B cell (primary cell): ENCODE measurements at regions of chr1 and their contacts with region 1.

Region 1: GRCh38 chr1:224113918-224114786 is at the start of gene FBXO28:
- DNase-seq: peak; percentile 93
- ATAC-seq: peak; percentile 92
- H3K4me3 ChIP-seq: peak within 1 kb of the TSS; percentile 78 to 92 (median 86)
- H3K4me3 Mint-ChIP-seq: peak within 1 kb of the TSS; percentile 92
- H3K27ac ChIP-seq: peak within 1 kb of the TSS; percentile 96
- H3K27ac Mint-ChIP-seq: peak within 1 kb of the TSS; percentile 95
- H3K4me1 ChIP-seq: peaks cover 20 to 27% of the 10 kb centered on the region in 2 donors
- H3K4me1 Mint-ChIP-seq: peaks cover 30% of the 10 kb centered on the region
- H3K27me3 ChIP-seq: peaks cover 0 to 5% (median 0%) of the 10 kb centered on the region in 4 experiments
- H3K27me3 Mint-ChIP-seq: peaks cover under 1% of the 10 kb centered on the region
- CTCF ChIP-seq: peak; percentile 17
- total RNA-seq, gene FBXO28: 37.0 and 39.7 TPM in 2 replicates

Region 2: GRCh38 chr1:223700942-223701637 is 413.1 kb before region 1 on chr1:
- CTCF ChIA-PET with region 1: no interaction called
- POLR2A ChIA-PET with region 1: no interaction called
- intact Hi-C with region 1: loop called (anchors 2 kb)
- DNase-seq: no peak
- ATAC-seq: no peak
- H3K4me3 ChIP-seq: no peak overlapping the region
- H3K4me3 Mint-ChIP-seq: no peak overlapping the region
- H3K27ac ChIP-seq: no peak overlapping the region
- H3K27ac Mint-ChIP-seq: no peak overlapping the region
- H3K4me1 ChIP-seq: peaks cover 4 to 8% of the 10 kb centered on the region in 2 donors
- H3K4me1 Mint-ChIP-seq: peaks cover 8% of the 10 kb centered on the region
- H3K27me3 ChIP-seq: peaks cover 0 to 10% (median 0%) of the 10 kb centered on the region in 4 experiments
- H3K27me3 Mint-ChIP-seq: peaks cover 24% of the 10 kb centered on the region
- CTCF ChIP-seq: no peak

Region 3: GRCh38 chr1:224234017-224234416 is 119.9 kb after region 1 on chr1:
- CTCF ChIA-PET with region 1: interaction called, 3 read pairs
- POLR2A ChIA-PET with region 1: interaction called, 12 read pairs
- intact Hi-C with region 1: no loop called
- DNase-seq: no peak
- ATAC-seq: no peak
- H3K4me3 ChIP-seq: no peak overlapping the region
- H3K4me3 Mint-ChIP-seq: no peak overlapping the region
- H3K27ac ChIP-seq: no peak overlapping the region
- H3K27ac Mint-ChIP-seq: no peak overlapping the region
- H3K4me1 ChIP-seq: peaks cover 0 to 4% of the 10 kb centered on the region in 2 donors
- H3K4me1 Mint-ChIP-seq: peaks cover 4% of the 10 kb centered on the region
- H3K27me3 ChIP-seq: no peaks in the 10 kb centered on the region
- H3K27me3 Mint-ChIP-seq: no peaks in the 10 kb centered on the region
- CTCF ChIP-seq: no peak

Region 4: DNA sequence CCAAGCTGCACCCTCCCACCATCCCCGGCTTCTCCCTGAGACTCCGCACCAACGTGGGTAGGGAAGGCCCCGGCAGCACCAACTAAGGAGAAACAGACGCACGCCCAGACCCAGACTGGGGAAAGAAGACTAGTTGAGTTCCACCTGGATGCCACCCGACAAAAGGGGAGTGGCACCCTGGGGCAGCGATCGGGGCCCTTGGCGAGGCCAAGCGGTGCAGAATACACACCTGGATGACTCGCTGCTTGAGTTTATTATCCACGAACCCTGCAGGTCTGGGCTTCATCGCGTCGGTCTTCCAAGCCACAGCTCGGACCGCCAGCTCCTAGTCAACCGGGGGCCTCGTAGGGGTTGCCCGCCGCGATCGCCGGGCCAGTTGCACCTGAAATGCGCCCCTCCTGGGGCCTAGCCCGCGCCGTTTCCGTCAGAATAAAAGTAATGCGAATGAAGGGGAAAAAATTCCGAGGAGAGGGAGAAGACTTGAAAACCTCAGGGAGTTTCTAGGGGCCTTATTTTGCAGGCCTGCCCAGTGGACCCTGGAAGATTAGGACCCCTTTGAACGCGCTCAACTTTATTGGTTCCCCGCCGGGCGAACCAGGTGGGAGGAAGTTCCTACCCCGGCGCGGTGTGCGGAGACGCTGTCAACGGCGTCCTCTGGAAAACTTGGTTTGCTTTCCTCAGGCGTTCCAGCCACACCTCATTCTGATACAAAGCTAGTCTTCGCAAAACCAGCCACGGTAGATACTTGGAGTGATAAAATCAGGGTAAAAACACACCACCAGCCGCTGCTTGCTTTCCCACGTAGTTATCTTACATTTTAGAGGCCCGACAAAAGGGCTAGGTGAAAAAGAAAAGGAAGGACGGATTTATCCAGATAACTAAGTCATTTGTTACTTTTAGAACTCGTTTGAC is 215.9 kb after region 1 on chr1 and contains the start of gene NVL:
- CTCF ChIA-PET with region 1: interaction called, 100 read pairs
- POLR2A ChIA-PET with region 1: interaction called, 3 read pairs
- intact Hi-C with region 1: loop called (anchors 1 kb)
- DNase-seq: peak; percentile 92
- ATAC-seq: peak; percentile 86
- H3K4me3 ChIP-seq: peak within 1 kb of the TSS; percentile 61 to 88 (median 81)
- H3K4me3 Mint-ChIP-seq: peak within 1 kb of the TSS; percentile 99
- H3K27ac ChIP-seq: peak within 1 kb of the TSS; percentile 94 to 95
- H3K27ac Mint-ChIP-seq: peak within 1 kb of the TSS; percentile 100
- H3K4me1 ChIP-seq: peaks cover 11 to 25% of the 10 kb centered on the region in 2 donors
- H3K4me1 Mint-ChIP-seq: peaks cover 46% of the 10 kb centered on the region
- H3K27me3 ChIP-seq: no peaks in the 10 kb centered on the region
- H3K27me3 Mint-ChIP-seq: no peaks in the 10 kb centered on the region
- CTCF ChIP-seq: no peak
- total RNA-seq, gene NVL: 45.5 and 47.8 TPM in 2 replicates

Region 5: DNA sequence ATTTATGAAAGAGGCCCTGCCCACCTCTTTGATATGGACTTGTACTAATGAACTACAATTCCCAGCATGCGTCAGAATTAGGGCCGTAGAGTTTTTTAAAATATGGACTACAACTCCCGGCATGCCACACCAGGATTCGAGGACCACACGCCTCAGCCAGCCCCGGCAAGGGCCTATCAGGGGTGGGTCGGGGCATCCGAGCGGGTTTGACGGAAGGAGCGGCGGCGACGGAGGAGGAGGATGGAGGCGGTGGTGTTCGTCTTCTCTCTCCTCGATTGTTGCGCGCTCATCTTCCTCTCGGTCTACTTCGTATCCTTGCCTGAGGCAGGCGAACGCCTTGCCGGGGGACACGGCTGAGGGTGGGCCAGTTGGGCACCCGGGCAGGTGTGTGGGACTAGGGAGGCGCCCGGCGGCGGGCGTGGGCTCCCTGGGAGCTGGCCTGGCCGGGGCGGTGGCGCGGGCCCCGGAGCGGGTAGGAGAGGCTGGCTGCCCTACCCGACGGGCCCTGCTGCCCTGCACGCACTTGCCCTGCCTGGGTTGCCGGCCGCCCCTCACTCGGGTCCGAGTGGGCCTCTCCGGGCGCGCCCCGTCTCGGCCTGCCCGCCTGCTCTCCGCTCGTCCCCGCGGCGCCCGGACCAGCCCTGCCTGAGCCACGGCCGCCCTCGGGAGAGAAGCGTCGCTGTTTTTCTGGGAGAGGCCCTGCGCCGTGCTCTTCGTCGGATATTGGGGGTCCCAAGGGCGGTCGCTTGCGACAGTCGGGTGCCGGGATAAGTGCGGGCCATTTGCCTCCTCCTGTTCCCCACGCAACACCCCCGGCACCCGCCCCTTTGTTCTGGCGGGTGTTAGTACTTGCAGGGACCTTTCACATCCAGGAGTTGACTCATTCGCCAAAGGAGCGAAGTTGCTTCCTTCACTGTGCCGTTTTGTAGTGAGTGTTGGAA is 242.8 kb after region 1 on chr1 and contains the start of gene CNIH4:
- CTCF ChIA-PET with region 1: no interaction called
- POLR2A ChIA-PET with region 1: no interaction called
- intact Hi-C with region 1: loop called (anchors 1 kb)
- DNase-seq: peak; percentile 94
- ATAC-seq: peak; percentile 98
- H3K4me3 ChIP-seq: peak within 1 kb of the TSS; percentile 69 to 88 (median 82)
- H3K4me3 Mint-ChIP-seq: peak within 1 kb of the TSS; percentile 86
- H3K27ac ChIP-seq: peak within 1 kb of the TSS; percentile 34 to 61
- H3K27ac Mint-ChIP-seq: peak within 1 kb of the TSS; percentile 92
- H3K4me1 ChIP-seq: peaks cover 9 to 14% of the 10 kb centered on the region in 2 donors
- H3K4me1 Mint-ChIP-seq: peaks cover 22% of the 10 kb centered on the region
- H3K27me3 ChIP-seq: no peaks in the 10 kb centered on the region
- H3K27me3 Mint-ChIP-seq: no peaks in the 10 kb centered on the region
- CTCF ChIP-seq: no peak
- total RNA-seq, gene CNIH4: 27.2 and 31.5 TPM in 2 replicates

Region 6: GRCh38 chr1:224434691-224435317 is 320.7 kb after region 1 on chr1 and contains the start of gene WDR26:
- CTCF ChIA-PET with region 1: interaction called, 4 read pairs
- POLR2A ChIA-PET with region 1: interaction called, 3 read pairs
- intact Hi-C with region 1: loop called (anchors 1 kb)
- DNase-seq: peak; percentile 91
- ATAC-seq: peak; percentile 83
- H3K4me3 ChIP-seq: peak within 1 kb of the TSS; percentile 65 to 97 (median 92)
- H3K4me3 Mint-ChIP-seq: peak within 1 kb of the TSS; percentile 99
- H3K27ac ChIP-seq: peak within 1 kb of the TSS; percentile 92 to 93
- H3K27ac Mint-ChIP-seq: peak within 1 kb of the TSS; percentile 99
- H3K4me1 ChIP-seq: peaks cover 27 to 41% of the 10 kb centered on the region in 2 donors
- H3K4me1 Mint-ChIP-seq: peaks cover 44% of the 10 kb centered on the region
- H3K27me3 ChIP-seq: no peaks in the 10 kb centered on the region
- H3K27me3 Mint-ChIP-seq: no peaks in the 10 kb centered on the region
- CTCF ChIP-seq: no peak
- total RNA-seq, gene WDR26: 108 and 111 TPM in 2 replicates

Region 7: GRCh38 chr1:224454397-224455066 is 340.4 kb after region 1 on chr1:
- CTCF ChIA-PET with region 1: interaction called, 43 read pairs
- POLR2A ChIA-PET with region 1: no interaction called
- intact Hi-C with region 1: loop called (anchors 1 kb)
- DNase-seq: no peak
- ATAC-seq: no peak
- H3K4me3 ChIP-seq: no peak overlapping the region
- H3K4me3 Mint-ChIP-seq: no peak overlapping the region
- H3K27ac ChIP-seq: no peak overlapping the region
- H3K27ac Mint-ChIP-seq: no peak overlapping the region
- H3K4me1 ChIP-seq: peaks cover 3 to 5% of the 10 kb centered on the region in 2 donors
- H3K4me1 Mint-ChIP-seq: peaks cover 11% of the 10 kb centered on the region
- H3K27me3 ChIP-seq: no peaks in the 10 kb centered on the region
- H3K27me3 Mint-ChIP-seq: no peaks in the 10 kb centered on the region
- CTCF ChIP-seq: no peak